Activated B cell treated with CpG ODN at 0.5 μM for 24 hours (primary cell): ENCODE measurements at regions of chr17 and their contacts with region 1.

Region 1: DNA sequence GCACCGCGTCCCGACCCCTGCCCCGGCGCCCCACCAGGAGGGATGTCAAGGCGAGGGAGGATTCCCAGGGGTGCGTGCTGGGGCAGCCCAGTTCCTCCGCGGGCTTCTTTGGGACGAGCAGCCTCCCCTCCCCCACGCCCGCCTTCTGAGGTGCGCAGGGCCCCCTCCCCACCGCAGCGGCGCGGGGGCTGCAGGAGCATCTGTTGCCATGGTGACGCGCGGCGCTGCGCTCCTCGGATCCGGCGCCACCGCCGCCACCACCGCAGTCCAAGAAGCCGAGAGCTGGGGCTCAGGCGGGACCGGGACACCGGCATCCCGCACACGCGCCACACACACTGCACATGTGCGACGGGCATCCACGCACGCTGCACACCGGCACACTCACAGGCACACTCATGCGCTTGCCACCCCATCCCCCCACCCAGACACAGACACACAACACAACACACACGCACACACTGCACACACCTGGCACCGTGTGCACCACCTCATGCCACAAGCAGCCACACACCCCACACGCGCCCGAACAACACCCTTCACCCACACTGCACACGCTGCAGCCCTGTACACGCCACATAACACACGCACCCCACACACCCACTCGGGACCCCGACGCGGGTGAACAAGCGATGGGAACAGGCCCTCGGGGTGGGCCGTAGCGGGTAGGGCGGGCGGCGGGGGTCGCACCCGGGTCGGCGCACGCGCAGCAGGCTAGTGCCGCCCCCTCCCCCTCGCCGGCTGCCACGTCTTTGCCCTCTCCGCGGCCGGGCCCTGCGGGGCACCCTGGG is 17.0 kb downstream of the ENPP7 start:
- DNase-seq: no peak
- ATAC-seq: no peak
- H3K4me3 Mint-ChIP-seq: no peak overlapping the region
- H3K27ac Mint-ChIP-seq: no peak overlapping the region
- H3K4me1 Mint-ChIP-seq: peaks cover 23% of the 10 kb centered on the region
- H3K27me3 Mint-ChIP-seq: peaks cover 41% of the 10 kb centered on the region
- CTCF ChIP-seq: no peak

Region 2: GRCh38 chr17:79777894-79778503 is 30.3 kb after region 1 on chr17 and contains the start of gene CBX2:
- CTCF ChIA-PET with region 1: interaction called, 3 read pairs
- POLR2A ChIA-PET with region 1: no interaction called
- intact Hi-C with region 1: loop called (anchors 1 kb)
- DNase-seq: peak; percentile 83
- ATAC-seq: peak; percentile 93
- H3K4me3 Mint-ChIP-seq: peak within 1 kb of the TSS; percentile 82
- H3K27ac Mint-ChIP-seq: no peak within 1 kb of the TSS
- H3K4me1 Mint-ChIP-seq: peaks cover 14% of the 10 kb centered on the region
- H3K27me3 Mint-ChIP-seq: peaks cover 65% of the 10 kb centered on the region
- CTCF ChIP-seq: no peak
- total RNA-seq, gene CBX2: 0.37 and 0.67 TPM in 2 replicates

Region 3: GRCh38 chr17:79796763-79797491 is 49.2 kb after region 1 on chr17 and contains the start of gene CBX8:
- CTCF ChIA-PET with region 1: no interaction called
- POLR2A ChIA-PET with region 1: no interaction called
- intact Hi-C with region 1: loop called (anchors 2 kb)
- DNase-seq: peak; percentile 95
- ATAC-seq: peak; percentile 88
- H3K4me3 Mint-ChIP-seq: peak within 1 kb of the TSS; percentile 85
- H3K27ac Mint-ChIP-seq: peak within 1 kb of the TSS; percentile 87
- H3K4me1 Mint-ChIP-seq: peaks cover 34% of the 10 kb centered on the region
- H3K27me3 Mint-ChIP-seq: peaks cover 32% of the 10 kb centered on the region
- CTCF ChIP-seq: no peak
- total RNA-seq, gene CBX8: 4.0 and 4.9 TPM in 2 replicates

Region 4: DNA sequence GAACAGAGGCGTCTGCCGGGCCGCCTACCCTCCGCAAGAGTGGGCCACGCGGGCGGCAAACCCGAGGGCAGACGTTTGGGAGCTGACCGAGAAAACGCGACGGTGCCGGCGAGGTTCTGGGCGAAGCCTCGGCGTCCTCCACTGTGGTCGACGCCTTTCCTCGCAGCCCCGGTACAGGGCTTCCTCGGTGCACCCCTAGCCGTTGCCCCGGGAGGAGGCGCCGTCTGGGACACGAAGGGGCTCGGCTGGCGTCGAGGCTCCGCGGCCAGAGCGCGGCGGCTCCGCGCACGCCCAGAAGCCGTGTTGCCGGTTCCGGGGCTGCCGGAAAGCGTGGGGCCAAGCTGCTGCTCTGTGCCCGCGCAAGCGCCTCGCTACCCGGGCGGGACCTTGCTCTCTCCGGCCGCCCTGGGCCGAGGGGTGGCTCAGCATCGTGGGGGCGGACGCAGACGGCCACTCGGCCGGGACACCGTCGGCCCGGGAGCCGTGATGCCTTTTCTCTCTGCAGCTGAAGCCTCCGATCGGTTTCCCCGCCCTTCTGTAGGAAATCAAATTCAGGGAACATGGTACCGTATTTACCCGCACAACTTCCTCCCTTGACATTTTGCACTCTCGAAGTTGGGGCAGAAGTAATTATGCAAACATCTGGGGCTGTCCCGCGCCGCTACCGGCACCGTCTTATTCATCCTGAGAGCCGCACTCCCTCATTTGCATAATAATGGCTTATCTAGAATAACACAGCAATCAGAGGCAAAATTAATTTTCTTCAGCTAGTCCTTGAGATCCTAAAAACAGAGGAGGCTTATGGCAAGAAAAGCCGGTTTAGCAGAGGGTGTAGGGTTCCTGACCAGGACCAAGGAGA is 56.5 kb after region 1 on chr17:
- CTCF ChIA-PET with region 1: interaction called, 4 read pairs
- POLR2A ChIA-PET with region 1: no interaction called
- intact Hi-C with region 1: loop called (anchors 2 kb)
- DNase-seq: peak; percentile 65
- ATAC-seq: peak; percentile 87
- H3K4me3 Mint-ChIP-seq: peak overlapping the region; percentile 81
- H3K27ac Mint-ChIP-seq: peak overlapping the region; percentile 91
- H3K4me1 Mint-ChIP-seq: peaks cover 43% of the 10 kb centered on the region
- H3K27me3 Mint-ChIP-seq: peaks cover 61% of the 10 kb centered on the region
- CTCF ChIP-seq: no peak

Region 5: GRCh38 chr17:79970576-79971068 is 222.9 kb after region 1 on chr17:
- CTCF ChIA-PET with region 1: interaction called, 6 read pairs
- POLR2A ChIA-PET with region 1: no interaction called
- intact Hi-C with region 1: loop called (anchors 2 kb)
- DNase-seq: no peak
- ATAC-seq: peak; percentile 60
- H3K4me3 Mint-ChIP-seq: no peak overlapping the region
- H3K27ac Mint-ChIP-seq: no peak overlapping the region
- H3K4me1 Mint-ChIP-seq: peaks cover 29% of the 10 kb centered on the region
- H3K27me3 Mint-ChIP-seq: no peaks in the 10 kb centered on the region
- CTCF ChIP-seq: no peak

Region 6: GRCh38 chr17:79991140-79991923 is 243.6 kb after region 1 on chr17:
- CTCF ChIA-PET with region 1: interaction called, 13 read pairs
- POLR2A ChIA-PET with region 1: interaction called, 3 read pairs
- intact Hi-C with region 1: loop called (anchors 1 kb)
- DNase-seq: peak; percentile 67
- ATAC-seq: peak; percentile 91
- H3K4me3 Mint-ChIP-seq: peak overlapping the region; percentile 69
- H3K27ac Mint-ChIP-seq: no peak overlapping the region
- H3K4me1 Mint-ChIP-seq: peaks cover 35% of the 10 kb centered on the region
- H3K27me3 Mint-ChIP-seq: peaks cover 2% of the 10 kb centered on the region
- CTCF ChIP-seq: no peak